A673 (cell line): ENCODE measurements at regions of chr2 and their contacts with region 1.

Region 1: DNA sequence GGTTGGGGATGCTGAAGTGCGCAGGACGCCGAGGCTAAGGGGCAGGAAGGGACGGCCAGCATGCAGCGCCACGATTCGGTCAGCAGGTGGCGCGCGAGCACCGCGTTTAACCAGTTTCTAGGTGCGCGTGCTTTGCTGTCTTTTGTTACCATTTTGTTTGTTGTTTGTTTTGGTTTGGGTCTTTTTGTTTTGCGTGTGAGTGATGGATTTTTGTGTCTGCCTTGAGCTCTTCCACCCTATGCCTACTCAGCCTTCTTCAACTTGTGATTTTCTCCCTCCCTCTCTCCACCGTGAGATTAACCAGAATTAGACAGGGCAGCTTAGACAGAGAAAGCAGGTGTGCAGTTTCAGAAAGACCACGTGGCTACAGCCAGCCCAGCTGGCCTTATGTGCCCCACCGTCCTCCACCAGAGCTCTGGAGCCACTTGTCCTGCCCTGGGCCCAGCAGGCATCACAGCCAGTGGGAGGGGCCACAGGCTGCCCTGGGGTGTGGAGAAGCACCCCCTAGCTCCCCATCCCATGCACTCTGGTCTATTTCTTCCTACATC is 180.2 kb downstream of the RNF144A start:
- DNase-seq: peak; percentile 80
- H3K4me3 ChIP-seq: peak overlapping the region; percentile 18
- H3K27ac ChIP-seq: no peak overlapping the region
- H3K4me1 ChIP-seq: peaks cover 12% of the 10 kb centered on the region
- H3K27me3 ChIP-seq: no peaks in the 10 kb centered on the region
- CTCF ChIP-seq: peak; percentile 99

Region 2: GRCh38 chr2:7672027-7672684 is 574.7 kb after region 1 on chr2:
- CTCF ChIA-PET with region 1: no interaction called
- POLR2A ChIA-PET with region 1: no interaction called
- intact Hi-C with region 1: loop called (anchors 5 kb)
- DNase-seq: peak; percentile 64
- H3K4me3 ChIP-seq: no peak overlapping the region
- H3K27ac ChIP-seq: no peak overlapping the region
- H3K4me1 ChIP-seq: no peaks in the 10 kb centered on the region
- H3K27me3 ChIP-seq: no peaks in the 10 kb centered on the region
- CTCF ChIP-seq: peak; percentile 84